HCT116 (cell line): ENCODE measurements at regions of chr20 and their contacts with region 1.

Region 1: DNA sequence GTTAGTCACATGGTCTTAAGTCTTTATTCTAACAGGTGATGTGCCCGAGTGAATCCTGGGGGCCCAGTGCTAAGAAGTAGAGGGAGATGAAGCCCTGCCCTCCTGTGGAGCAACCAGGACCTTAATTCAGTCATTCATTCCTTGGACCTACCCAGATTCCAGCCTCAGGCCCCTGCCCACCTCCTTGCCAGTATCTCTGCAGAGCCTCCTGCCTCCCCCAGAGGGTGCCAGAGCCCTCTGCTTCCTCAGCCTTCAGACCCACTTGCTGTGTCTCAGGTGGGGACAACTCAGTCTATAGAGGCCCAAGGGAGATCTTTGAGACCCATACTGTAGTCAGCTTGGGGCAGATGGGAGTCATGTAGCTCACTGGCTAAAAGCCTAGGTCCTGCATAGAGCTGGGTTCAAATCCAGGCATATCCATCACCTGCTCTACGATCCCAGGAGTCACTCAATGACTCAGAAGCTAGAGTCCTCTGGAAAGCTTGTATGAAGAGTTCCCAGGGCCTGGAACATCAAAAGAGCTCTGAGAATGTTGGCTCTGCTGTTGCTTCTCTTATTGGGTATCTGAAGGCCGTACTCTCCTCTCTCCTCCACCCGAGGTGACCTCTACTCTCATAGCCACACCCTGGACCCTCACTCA is 3.9 kb upstream of the SIGLEC1 start:
- DNase-seq: peak; percentile 51
- ATAC-seq: peak; percentile 100
- H3K4me3 ChIP-seq: no peak overlapping the region
- H3K27ac ChIP-seq: no peak overlapping the region
- H3K4me1 ChIP-seq: 0 out of 4 replicates have a peak, but pooled peaks cover 0 to 4% of the 10 kb centered on the region in 2 experiments
- H3K27me3 ChIP-seq: peaks cover 7% of the 10 kb centered on the region
- CTCF ChIP-seq: peak; percentile 85 to 94 (median 91)
- POLR2A ChIP-seq: no peak
- RAD21 ChIP-seq: peak; percentile 93

Region 2: DNA sequence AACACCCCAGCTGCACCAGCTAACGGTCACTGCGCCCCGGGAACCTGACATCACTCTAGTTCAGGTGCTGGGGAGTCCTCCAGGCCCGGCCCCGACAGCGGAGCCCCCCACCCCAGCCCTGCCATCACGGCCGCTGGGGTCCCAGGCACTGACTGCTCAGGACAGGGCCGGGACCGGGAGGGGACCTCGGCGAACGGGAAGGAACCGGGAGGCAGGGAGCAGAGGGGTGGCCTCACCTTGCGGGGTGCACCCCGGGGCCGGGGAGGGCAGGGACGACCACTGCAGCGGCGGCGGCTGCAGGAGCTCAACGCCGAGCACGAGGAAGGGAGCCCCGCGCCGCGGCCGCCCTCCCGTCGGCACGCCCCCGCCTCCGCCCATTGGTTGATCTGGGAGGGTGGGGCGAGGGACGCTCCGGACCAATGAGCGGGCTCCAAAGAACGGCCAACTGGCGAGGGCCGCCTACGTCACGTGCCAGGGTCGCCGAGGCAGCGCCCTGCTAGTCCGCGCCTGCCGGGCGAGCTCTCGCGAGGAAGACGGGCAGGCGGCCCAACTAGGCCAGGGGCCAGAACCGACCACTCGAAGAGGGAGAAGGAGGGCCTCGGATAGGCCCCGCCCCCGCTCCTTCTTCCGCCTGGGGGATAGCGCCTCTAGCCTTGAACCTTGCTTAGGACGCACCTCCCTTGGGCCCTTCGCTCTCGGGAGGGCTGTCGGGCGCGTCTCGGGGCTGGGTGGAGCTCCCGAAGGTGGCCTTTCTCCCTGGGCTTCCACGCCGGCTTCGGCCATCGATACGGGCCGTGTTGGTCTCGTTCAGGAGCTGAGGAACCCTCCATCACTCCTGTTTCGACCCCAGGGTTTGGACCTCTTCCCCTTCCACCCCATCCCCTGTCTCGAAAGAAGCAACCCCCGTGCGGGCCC is 51.4 kb after region 1 on chr20 and contains the start of gene ADISSP:
- CTCF ChIA-PET with region 1: interaction called, 18 read pairs
- POLR2A ChIA-PET with region 1: interaction called, 3 read pairs
- RAD21 ChIA-PET with region 1: no interaction called
- intact Hi-C with region 1: loop called (anchors 2 kb)
- DNase-seq: peak; percentile 95
- ATAC-seq: peak; percentile 92
- H3K4me3 ChIP-seq: peak within 1 kb of the TSS; percentile 84 to 91
- H3K27ac ChIP-seq: peak within 1 kb of the TSS; percentile 83
- H3K4me1 ChIP-seq: peaks cover 12 to 36% of the 10 kb centered on the region in 2 experiments
- H3K27me3 ChIP-seq: no peaks in the 10 kb centered on the region
- CTCF ChIP-seq: peak in 2 of 3 experiments; percentile 8 to 26; a peak in 2 of 6 replicates
- POLR2A ChIP-seq: peak; percentile 31
- RAD21 ChIP-seq: no peak
- total RNA-seq, gene ADISSP: 99.4 TPM

Region 3: DNA sequence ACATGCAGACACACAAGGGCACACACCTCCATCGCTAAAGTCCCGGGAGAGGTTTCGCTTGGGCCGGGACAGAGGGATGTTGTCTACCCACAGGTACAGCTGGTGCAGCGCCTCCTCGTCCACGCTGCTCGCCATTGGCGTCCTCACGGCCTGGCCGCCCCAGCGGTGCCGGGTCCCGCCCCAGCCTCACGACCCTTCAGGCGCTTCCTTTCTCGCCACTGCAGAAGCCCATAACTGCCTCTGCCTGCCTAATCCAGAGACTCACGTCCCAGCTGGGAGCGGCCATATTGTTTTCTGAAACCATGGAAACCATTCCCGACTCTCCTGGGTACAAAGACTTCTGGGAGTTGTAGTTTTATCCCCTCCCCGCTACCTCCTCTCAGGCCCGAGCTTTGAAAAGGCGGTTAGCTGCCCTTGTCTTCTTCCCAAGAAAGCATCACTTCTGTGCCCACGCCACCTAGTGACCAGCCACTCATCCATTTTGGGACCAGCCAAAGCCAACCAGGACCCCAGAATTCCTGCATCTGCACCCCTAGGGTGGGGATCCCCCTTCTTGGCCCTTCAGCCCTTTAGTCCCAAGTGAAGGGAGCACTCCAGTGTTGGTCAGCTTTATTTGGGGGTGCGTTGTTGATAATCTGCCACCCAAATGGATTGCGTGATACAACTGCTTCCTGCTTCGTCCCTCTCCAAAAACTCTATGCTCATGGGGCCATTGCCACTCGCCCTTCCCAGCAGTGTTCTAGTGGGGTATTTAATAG is 65.0 kb after region 1 on chr20 and contains the start of gene SPEF1:
- CTCF ChIA-PET with region 1: interaction called, 24 read pairs
- POLR2A ChIA-PET with region 1: interaction called, 3 read pairs
- RAD21 ChIA-PET with region 1: interaction called in 1 of 2 experiments, 4 read pairs
- intact Hi-C with region 1: loop called (anchors 1 kb)
- DNase-seq: peak; percentile 92
- ATAC-seq: peak; percentile 90
- H3K4me3 ChIP-seq: peak within 1 kb of the TSS; percentile 55 to 64
- H3K27ac ChIP-seq: peak within 1 kb of the TSS; percentile 3; the same call in 1 of the 2 replicates
- H3K4me1 ChIP-seq: peaks cover 7 to 27% of the 10 kb centered on the region in 2 experiments; a peak in 3 of 4 replicates
- H3K27me3 ChIP-seq: no peaks in the 10 kb centered on the region
- CTCF ChIP-seq: peak; percentile 63 to 83 (median 69)
- POLR2A ChIP-seq: no peak
- RAD21 ChIP-seq: peak; percentile 66
- total RNA-seq, gene SPEF1: 0.93 TPM

Region 4: DNA sequence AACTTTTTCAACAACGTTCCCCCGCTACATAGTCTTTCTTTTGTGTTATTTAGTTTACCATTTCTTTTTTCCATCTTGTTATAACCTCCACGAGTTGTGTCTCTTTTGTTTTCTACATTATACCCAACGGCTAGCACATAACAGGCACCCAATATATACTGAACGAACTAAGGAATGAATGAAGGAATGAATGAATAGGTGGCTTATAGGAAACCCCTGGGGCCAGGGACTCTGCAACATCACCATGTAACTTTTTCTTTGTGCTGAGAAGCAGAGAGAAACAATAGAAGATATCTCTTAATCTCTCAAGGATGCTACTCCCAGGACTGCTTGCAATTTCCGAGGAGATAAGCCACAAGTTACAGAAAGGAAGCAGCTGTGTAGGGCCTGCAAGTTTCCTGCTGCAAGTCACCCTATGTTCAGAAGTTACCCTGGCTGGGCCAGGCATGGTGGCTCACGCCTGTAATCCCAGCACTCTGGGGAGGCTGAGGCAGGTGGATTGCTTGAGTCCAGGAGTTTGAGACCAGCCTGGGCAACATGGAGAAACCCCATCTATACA is 122.9 kb after region 1 on chr20:
- CTCF ChIA-PET with region 1: no interaction called
- POLR2A ChIA-PET with region 1: no interaction called
- RAD21 ChIA-PET with region 1: no interaction called
- intact Hi-C with region 1: no loop called
- DNase-seq: no peak
- ATAC-seq: no peak
- H3K4me3 ChIP-seq: no peak overlapping the region
- H3K27ac ChIP-seq: no peak overlapping the region
- H3K4me1 ChIP-seq: peaks cover 28 to 44% of the 10 kb centered on the region in 2 experiments
- H3K27me3 ChIP-seq: no peaks in the 10 kb centered on the region
- CTCF ChIP-seq: no peak
- POLR2A ChIP-seq: no peak
- RAD21 ChIP-seq: no peak

Region 5: DNA sequence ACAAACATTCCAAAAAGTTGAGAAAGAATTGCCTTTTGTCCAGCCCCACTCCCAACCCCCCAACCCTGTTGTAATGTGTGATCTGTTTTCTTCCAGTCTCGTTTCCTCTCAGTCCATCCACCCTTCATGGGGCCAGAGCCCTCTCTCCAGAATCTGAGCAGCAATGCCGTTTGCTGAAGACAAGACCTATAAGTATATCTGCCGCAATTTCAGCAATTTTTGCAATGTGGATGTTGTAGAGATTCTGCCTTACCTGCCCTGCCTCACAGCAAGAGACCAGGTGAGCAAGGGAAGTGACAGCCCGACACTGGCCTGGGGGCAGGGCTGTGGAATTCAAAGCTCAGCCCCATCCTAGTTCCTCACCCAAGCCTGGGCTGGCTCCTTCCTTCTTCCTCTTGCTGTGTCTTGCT is 138.2 kb after region 1 on chr20:
- CTCF ChIA-PET with region 1: no interaction called
- POLR2A ChIA-PET with region 1: no interaction called
- RAD21 ChIA-PET with region 1: no interaction called
- intact Hi-C with region 1: loop called (anchors 1 kb)
- DNase-seq: no peak
- ATAC-seq: peak; percentile 40; the same call in 1 of the 2 replicates
- H3K4me3 ChIP-seq: no peak overlapping the region
- H3K27ac ChIP-seq: no peak overlapping the region
- H3K4me1 ChIP-seq: peaks cover 0 to 14% of the 10 kb centered on the region in 2 experiments; a peak in 2 of 4 replicates
- H3K27me3 ChIP-seq: no peaks in the 10 kb centered on the region
- CTCF ChIP-seq: no peak
- POLR2A ChIP-seq: no peak
- RAD21 ChIP-seq: no peak

Region 6: DNA sequence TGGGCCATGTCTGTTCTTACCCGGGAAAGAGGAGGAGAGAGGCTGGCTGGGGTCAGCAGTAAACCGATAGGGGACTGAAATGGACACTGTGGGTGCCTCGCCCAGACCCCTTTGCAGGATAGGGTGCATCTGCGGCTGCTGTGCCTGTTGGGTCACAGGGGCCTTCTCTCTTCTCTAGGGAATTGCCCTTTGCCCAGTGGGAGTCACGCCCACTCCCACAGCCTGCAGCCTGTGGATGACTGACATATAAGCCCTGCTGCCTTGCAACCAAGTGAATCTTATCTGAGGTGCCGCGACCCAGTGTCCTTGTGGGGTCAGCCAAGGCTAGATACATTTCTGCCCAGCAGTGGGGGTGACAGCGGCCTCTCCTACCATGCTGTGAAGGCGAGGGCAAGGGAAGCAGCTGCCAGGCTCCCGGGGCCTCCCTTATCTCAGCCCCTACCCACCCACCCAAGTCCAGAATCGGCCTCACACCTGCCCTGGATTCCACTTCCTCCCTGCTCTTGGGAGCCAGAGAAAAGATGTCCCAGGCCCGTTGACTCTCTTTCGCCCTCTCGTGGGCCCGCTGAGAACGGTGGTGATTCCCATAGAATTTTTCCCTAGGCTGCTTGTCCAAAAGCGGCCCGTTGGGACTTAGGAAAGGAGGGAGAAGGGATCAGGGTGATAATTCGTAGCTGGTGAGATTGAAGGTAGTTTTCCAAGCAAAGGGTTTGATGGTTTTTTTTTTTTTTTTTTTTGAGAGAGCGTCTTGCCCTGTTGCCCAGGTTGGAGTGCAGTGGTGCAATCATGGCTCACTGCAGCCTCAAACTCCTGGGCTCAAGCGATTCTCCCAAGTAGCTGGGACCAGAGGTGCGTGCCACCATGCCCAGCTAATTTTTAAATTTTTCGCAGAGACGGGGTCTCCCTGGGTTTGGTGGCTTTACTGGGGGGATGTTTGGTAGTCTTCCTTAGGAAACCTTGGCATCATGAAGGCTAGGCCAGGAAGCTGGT is 375.5 kb after region 1 on chr20:
- CTCF ChIA-PET with region 1: no interaction called
- POLR2A ChIA-PET with region 1: no interaction called
- RAD21 ChIA-PET with region 1: no interaction called
- intact Hi-C with region 1: loop called (anchors 5 kb)
- DNase-seq: no peak
- ATAC-seq: peak; percentile 93
- H3K4me3 ChIP-seq: no peak overlapping the region
- H3K27ac ChIP-seq: no peak overlapping the region
- H3K4me1 ChIP-seq: no peaks in the 10 kb centered on the region
- H3K27me3 ChIP-seq: no peaks in the 10 kb centered on the region
- CTCF ChIP-seq: peak; percentile 69 to 82 (median 72); a peak in 5 of 6 replicates
- POLR2A ChIP-seq: no peak
- RAD21 ChIP-seq: peak; percentile 74